Activated naive CD4-positive, alpha-beta T cell treated with anti-CD3 and anti-CD28 coated beads for 36 hours (primary cell): ENCODE measurements at regions of chr5 and their contacts with region 1.

Region 1: GRCh38 chr5:172764849-172765765 is 5.9 kb downstream of the DUSP1 start:
- DNase-seq: peak; percentile 99
- H3K4me3 Mint-ChIP-seq: peak overlapping the region; percentile 77
- H3K27ac Mint-ChIP-seq: peak overlapping the region; percentile 87
- H3K4me1 Mint-ChIP-seq: peaks cover 43% of the 10 kb centered on the region
- H3K27me3 Mint-ChIP-seq: no peaks in the 10 kb centered on the region

Region 2: DNA sequence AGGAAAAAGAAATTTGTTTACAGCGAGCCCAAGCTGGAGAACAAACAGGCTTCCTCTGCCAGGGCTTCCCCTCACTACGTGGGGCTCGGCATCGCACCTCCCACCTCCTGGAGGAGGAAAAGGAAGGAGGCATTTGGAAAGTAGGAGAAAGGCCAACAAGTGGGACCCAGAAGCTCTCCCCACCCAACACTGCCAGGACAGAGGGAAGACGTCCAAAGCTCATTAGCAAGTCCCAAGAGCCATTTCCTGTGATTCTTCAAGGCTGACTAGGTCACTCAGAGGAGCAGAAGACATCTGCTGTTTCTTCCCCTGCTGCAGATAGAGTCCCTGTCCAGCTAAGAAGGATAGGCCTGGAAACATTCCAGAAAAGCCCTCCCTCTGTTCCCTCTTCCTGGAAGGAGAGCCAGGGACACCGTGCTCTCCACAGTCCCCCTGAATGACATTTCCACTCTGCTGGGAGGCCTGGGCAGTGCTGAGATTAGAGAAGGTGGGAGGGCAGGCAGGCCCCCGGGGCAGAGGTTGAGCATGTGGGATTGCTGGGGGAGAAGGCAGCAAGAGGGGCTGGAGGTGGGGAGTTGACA is 181.1 kb before region 1 on chr5:
- CTCF ChIA-PET with region 1: no interaction called
- intact Hi-C with region 1: no loop called
- DNase-seq: no peak
- H3K4me3 Mint-ChIP-seq: no peak overlapping the region
- H3K27ac Mint-ChIP-seq: no peak overlapping the region
- H3K4me1 Mint-ChIP-seq: no peaks in the 10 kb centered on the region
- H3K27me3 Mint-ChIP-seq: peaks cover 11% of the 10 kb centered on the region

Region 3: DNA sequence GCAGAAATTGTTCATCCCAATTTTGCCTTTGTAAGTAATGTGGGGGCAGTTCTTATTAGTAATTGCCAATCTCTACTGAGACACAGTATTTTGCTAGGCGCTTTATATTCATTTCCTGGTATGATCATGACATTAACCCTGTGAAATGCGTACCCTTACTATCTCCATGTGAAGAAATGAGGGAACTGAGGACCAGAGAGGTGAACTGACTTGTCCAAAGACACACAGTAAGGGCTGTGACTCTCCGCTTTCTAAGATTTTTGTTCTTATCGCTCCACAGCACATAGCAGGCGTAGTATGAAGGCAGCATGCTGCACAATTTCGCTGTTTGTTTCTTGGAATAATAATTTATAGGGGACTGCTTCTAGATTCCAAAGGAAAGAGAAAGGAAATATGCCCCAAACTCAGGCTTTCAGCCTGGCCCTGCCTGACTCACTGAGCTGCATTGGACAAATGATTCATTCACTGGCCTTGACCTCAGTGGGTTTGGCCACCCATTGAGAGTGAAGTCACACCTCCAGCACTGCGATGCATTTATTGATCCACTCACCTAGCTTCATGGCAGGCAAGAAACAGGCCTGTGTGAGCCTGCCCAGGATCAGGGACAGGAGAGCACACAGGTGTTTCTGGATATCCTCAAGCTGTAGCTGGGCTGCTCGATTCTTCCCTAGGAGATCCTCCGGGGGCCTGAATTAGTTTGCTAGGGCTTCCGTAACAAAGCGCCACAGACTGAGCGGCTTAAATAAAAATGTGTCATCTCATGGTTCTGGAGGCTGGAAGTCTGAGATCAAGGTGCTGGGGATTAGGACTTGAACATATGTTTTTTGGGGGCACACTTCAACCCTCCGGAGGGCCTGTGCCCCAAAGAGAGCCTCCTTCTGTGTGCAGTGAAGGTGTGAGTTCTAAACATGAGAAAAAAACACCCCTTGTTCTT is 13.0 kb after region 1 on chr5:
- CTCF ChIA-PET with region 1: interaction called, 3 read pairs
- intact Hi-C with region 1: loop called (anchors 1 kb)
- DNase-seq: no peak
- H3K4me3 Mint-ChIP-seq: no peak overlapping the region
- H3K27ac Mint-ChIP-seq: peak overlapping the region; percentile 77
- H3K4me1 Mint-ChIP-seq: peaks cover 55% of the 10 kb centered on the region
- H3K27me3 Mint-ChIP-seq: no peaks in the 10 kb centered on the region

Region 4: DNA sequence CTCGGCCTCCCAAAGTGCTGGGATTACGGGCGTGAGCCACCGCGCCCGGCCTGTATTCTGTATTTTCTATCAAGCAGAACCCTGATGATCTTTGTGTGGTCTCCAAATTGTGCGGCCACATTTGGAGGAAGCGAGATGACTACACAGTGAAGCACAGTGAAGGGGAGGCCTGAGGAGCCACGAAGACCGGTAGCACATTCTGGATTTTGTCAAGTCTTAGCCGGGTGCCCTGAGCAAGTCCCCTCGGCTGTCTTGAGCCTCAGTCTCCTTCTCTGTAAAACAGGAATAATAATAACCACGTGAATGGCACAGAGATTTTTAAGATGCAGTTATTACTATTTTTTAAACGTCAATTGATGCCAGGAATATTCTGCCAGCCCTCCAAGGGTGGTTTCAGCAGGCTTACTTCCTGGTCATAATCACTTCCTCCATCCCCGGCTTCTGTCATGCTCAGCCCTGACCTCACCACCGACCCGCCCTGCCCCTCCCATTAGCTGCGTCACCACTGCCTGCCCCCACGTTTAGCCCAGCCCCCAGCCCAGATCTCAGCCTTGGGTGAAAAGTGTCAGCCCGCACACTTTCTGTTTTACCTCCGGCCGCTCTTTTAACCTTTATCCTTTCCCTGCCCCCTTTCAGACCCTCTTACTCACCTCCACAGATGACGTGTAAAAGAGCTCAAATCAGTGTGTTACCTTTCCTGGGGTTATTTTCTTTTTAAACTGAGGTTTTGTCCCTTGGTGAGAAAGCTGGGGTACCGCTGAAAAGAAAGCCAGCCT is 42.0 kb after region 1 on chr5:
- CTCF ChIA-PET with region 1: no interaction called
- intact Hi-C with region 1: loop called (anchors 1 kb)
- DNase-seq: peak; percentile 98
- H3K4me3 Mint-ChIP-seq: peak overlapping the region; percentile 43
- H3K27ac Mint-ChIP-seq: peak overlapping the region; percentile 86
- H3K4me1 Mint-ChIP-seq: peaks cover 14% of the 10 kb centered on the region
- H3K27me3 Mint-ChIP-seq: no peaks in the 10 kb centered on the region

Region 5: DNA sequence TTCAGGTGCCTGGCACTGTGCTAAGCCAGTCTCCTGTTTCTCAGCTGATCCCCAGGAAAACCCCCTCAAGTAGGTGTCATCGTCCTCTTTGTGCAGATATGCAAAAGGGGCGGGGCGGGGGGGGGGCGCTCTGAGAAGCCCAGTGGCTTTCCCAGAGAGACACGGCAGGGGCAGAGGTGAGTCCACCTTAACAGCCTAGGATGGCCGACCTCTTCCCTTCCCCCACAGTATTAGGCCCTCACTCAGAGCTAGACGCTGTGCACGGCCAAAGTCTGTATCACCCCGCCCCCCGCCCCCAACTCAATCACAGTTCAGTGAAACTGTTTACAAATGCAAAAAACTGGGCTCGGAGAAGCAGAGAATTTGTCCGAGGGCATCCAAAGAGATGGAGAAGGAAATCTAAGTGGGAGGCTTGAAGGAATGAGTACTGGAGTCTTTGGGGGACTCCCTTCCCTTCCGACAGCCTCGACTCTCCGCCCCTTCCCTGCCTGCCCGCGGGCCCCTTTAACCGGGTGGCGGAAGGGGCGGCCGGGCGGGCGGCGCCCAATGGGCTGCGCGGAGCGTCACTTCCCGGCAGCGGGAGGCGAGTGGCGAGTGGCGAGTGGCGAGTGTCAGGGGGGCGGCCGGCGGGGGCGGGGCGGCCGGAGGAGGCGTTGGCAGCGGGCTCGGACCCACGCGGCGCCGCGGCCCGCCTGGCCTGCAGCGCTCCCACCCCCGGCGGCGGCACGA is 68.7 kb after region 1 on chr5 and contains the start of gene ERGIC1:
- CTCF ChIA-PET with region 1: no interaction called
- intact Hi-C with region 1: loop called (anchors 1 kb)
- DNase-seq: peak; percentile 74
- H3K4me3 Mint-ChIP-seq: peak within 1 kb of the TSS; percentile 80
- H3K27ac Mint-ChIP-seq: peak within 1 kb of the TSS; percentile 71
- H3K4me1 Mint-ChIP-seq: peaks cover 41% of the 10 kb centered on the region
- H3K27me3 Mint-ChIP-seq: no peaks in the 10 kb centered on the region
- total RNA-seq, gene ERGIC1: 33.4 to 36.2 TPM

Region 6: GRCh38 chr5:172958331-172959046 is 193.4 kb after region 1 on chr5:
- CTCF ChIA-PET with region 1: interaction called, 3 read pairs
- intact Hi-C with region 1: loop called (anchors 1 kb)
- DNase-seq: peak; percentile 60
- H3K4me3 Mint-ChIP-seq: peak overlapping the region; percentile 93
- H3K27ac Mint-ChIP-seq: peak overlapping the region; percentile 86
- H3K4me1 Mint-ChIP-seq: peaks cover 16% of the 10 kb centered on the region
- H3K27me3 Mint-ChIP-seq: no peaks in the 10 kb centered on the region

Region 7: GRCh38 chr5:173057062-173057924 is 292.2 kb after region 1 on chr5:
- CTCF ChIA-PET with region 1: no interaction called
- intact Hi-C with region 1: loop called (anchors 1 kb)
- DNase-seq: peak; percentile 100
- H3K4me3 Mint-ChIP-seq: peak overlapping the region; percentile 91
- H3K27ac Mint-ChIP-seq: peak overlapping the region; percentile 97
- H3K4me1 Mint-ChIP-seq: peaks cover 51% of the 10 kb centered on the region
- H3K27me3 Mint-ChIP-seq: no peaks in the 10 kb centered on the region

Region 8: DNA sequence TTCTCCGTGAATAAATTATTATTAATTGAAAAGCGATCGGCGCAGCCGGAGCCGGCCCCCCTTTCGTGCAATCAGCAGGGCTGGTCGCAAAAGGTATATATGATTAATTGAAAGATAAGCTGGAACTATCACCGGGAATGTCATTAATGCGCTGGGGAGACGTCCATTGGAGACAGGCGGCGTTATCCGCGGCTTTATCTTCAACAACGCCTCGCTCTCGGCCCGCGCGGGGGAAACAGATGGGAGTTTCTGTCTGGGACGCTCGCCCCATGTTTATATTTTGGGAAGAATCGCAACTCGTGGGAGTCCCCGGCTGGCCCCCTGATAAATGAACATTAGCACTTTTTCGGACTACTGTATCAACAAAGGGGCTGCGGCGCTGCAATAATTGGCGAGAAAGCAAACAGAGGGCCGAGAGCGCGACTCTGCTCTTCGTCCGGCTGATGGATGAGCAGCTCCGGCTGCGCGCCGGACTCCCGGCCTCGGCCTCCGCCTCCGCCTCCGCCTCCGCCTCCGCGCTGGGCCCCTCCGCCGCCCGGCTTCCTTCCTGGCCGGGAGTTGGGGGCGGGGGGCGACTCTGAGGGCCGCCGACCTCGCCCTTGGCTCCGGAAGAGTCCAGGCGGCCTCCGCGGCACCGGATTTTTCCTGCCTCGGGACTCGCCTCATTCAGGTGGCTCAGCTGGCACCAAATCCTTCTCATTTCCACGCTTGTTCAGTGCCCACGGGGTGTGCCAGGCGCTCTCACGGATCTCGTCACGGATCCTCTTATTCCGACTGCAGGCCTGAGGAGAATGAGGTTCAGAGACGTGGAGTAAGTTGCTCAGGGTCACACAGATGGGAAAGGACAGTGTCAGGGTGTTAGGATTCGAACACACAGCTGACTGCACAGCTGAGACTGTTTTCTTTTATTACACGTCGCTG is 473.5 kb after region 1 on chr5:
- CTCF ChIA-PET with region 1: no interaction called
- intact Hi-C with region 1: loop called (anchors 5 kb)
- DNase-seq: no peak
- H3K4me3 Mint-ChIP-seq: peak overlapping the region; percentile 47
- H3K27ac Mint-ChIP-seq: no peak overlapping the region
- H3K4me1 Mint-ChIP-seq: peaks cover 45% of the 10 kb centered on the region
- H3K27me3 Mint-ChIP-seq: peaks cover 85% of the 10 kb centered on the region